Activated B cell treated with CpG ODN at 0.5 μM for 24 hours (primary cell): ENCODE measurements at regions of chr6 and their contacts with region 1.

Region 1: DNA sequence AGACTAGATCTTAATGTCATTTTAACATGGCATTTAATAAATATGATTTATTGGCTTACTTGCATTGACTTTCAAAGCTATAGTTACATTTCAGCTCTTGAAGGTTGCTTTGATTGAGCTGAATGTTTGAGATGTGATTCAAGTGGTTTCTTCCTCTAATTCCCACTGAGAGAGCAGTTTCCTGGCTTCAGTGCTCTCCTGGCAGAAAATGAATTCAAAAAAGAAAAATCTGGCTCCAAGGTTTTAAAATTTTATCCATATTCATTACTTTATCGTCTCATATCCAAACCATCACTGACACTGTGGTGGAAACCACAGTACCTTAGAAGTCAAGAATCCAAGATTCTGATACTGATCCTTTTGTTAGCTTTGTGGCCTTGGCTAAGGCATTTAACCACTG is 263.1 kb upstream of the HSF2 start:
- DNase-seq: no peak
- ATAC-seq: no peak
- H3K4me3 Mint-ChIP-seq: no peak overlapping the region
- H3K27ac Mint-ChIP-seq: no peak overlapping the region
- H3K4me1 Mint-ChIP-seq: no peaks in the 10 kb centered on the region
- H3K27me3 Mint-ChIP-seq: no peaks in the 10 kb centered on the region
- CTCF ChIP-seq: no peak

Region 2: DNA sequence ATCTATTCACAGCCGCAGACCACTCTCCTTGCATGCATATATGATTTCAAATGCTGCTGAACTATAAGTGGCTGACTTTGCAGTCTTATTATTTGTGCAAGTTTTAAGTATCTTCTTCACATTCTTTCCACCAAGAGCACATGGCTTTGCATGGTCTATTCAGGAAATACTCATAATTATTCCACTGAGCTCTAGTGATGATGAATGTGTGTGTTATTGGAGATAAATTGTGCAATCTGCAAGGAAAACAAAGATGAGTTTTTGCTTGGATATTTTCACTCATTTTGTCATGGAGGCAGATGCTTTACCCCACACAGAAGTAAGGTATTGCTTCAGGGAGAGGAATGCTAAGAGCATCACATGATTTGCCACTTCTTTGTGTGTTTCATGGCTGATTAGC is 1566.7 kb before region 1 on chr6:
- CTCF ChIA-PET with region 1: no interaction called
- POLR2A ChIA-PET with region 1: no interaction called
- intact Hi-C with region 1: no loop called
- DNase-seq: no peak
- ATAC-seq: no peak
- H3K4me3 Mint-ChIP-seq: no peak overlapping the region
- H3K27ac Mint-ChIP-seq: no peak overlapping the region
- H3K4me1 Mint-ChIP-seq: no peaks in the 10 kb centered on the region
- H3K27me3 Mint-ChIP-seq: no peaks in the 10 kb centered on the region
- CTCF ChIP-seq: no peak

Region 3: DNA sequence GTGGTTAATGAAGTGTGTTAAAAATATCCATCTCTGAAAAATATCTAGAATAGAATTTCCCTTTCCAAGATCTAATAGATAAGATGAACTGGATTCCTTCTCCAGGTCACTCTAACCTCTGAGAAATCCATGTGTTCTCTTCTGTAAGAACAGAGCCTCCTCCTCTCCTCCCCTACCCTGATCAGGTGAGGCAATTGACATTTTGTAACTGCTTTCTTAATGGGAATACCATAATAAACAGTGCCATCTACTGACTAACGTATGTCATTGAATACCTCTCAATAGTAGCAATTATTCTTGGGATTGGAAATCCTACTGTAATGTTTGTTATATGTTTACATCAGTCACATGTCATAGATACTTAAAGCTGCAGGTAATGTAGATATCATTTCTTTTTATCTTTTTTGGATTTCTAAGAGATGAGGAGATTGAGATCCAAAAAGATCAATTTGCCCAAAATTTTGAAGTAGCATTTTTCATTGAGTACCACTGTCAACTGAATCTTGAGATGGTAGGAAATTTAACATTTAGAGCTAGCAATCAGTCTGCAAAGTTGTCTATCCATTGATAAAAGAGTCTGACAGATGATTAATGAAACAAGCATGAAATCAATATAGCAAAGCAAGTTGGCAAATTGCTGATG is 102.7 kb before region 1 on chr6:
- CTCF ChIA-PET with region 1: no interaction called
- POLR2A ChIA-PET with region 1: no interaction called
- intact Hi-C with region 1: no loop called
- DNase-seq: no peak
- ATAC-seq: peak; percentile 25
- H3K4me3 Mint-ChIP-seq: no peak overlapping the region
- H3K27ac Mint-ChIP-seq: no peak overlapping the region
- H3K4me1 Mint-ChIP-seq: no peaks in the 10 kb centered on the region
- H3K27me3 Mint-ChIP-seq: peaks cover 2% of the 10 kb centered on the region
- CTCF ChIP-seq: no peak

Region 4: DNA sequence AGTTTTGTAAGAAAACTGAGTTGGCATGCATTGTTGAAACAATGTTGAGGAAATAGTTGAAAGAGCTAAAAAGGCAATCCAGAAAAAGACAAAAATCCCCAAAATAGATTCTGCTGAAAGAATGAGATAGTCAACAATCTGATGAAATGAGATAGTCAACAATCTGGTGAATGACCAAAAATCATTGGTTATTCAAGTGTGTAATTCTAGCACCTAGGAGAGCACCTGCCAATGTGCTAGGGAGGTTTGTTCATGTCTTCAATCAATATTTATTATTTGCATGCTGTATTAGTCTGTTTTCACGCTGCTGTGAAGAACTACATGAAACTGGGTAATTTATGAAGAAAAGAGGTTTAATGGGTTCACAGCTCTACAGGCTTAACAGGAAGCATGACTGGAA is 44.0 kb before region 1 on chr6:
- CTCF ChIA-PET with region 1: no interaction called
- POLR2A ChIA-PET with region 1: no interaction called
- intact Hi-C with region 1: loop called (anchors 1 kb)
- DNase-seq: no peak
- ATAC-seq: no peak
- H3K4me3 Mint-ChIP-seq: no peak overlapping the region
- H3K27ac Mint-ChIP-seq: no peak overlapping the region
- H3K4me1 Mint-ChIP-seq: no peaks in the 10 kb centered on the region
- H3K27me3 Mint-ChIP-seq: no peaks in the 10 kb centered on the region
- CTCF ChIP-seq: no peak